GM12878 (cell line): ENCODE measurements at regions of chrX and their contacts with region 1.

Region 1: GRCh38 chrX:18390941-18391538 is 34.4 kb upstream of the CDKL5 start:
- DNase-seq: peak; percentile 13
- ATAC-seq: peak; percentile 67
- H3K4me3 ChIP-seq: no peak overlapping the region
- H3K27ac ChIP-seq: no peak overlapping the region
- H3K4me1 ChIP-seq: no peaks in the 10 kb centered on the region
- H3K27me3 ChIP-seq: no peaks in the 10 kb centered on the region
- CTCF ChIP-seq: peak; percentile 35 to 73 (median 68); a peak in 5 of 6 replicates
- EP300 ChIP-seq: no peak
- POLR2A ChIP-seq: no peak
- RAD21 ChIP-seq: peak; percentile 92

Region 2: DNA sequence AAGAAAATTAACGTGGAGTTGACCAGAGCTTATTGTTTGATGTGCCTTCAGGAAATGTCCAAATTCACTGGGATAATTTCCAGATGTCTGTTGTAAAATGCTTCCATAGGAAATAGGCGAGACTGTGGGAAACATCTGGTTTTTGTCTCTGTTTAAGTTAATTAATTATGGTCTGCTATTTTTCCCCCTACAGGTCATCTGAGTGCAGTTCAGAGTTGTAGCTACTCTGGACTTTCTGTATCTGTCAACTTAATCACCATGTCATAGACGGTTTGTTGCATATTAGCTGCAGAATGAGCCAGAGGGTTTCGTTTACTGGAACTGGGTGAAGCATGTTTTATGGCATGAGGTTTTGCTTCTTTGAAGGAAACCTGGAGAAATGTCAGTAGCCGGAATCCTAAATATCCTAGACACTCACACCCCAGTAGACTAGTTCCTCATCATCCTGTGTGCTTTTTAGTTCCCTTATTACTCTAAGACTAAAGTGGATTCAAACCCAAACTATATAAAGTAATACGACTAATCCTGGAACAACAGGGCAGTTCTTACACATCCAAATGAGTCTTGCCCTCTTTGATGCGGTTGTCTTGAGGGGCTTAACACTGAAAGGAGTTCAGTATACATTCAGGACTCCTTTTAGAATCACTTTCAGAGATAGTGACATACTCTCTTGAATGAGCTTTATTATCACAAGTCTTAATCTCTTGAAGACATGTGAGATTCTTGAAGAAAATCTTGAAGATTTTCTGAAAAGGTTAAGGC is 379.0 kb after region 1 on chrX:
- CTCF ChIA-PET with region 1: no interaction called
- POLR2A ChIA-PET with region 1: no interaction called
- RAD21 ChIA-PET with region 1: no interaction called
- SMC1A ChIA-PET with region 1: no interaction called
- in situ Hi-C with region 1: no loop called
- intact Hi-C with region 1: loop called (anchors 10 kb)
- DNase-seq: no peak
- ATAC-seq: peak; percentile 66
- H3K4me3 ChIP-seq: no peak overlapping the region
- H3K27ac ChIP-seq: no peak overlapping the region
- H3K4me1 ChIP-seq: no peaks in the 10 kb centered on the region
- H3K27me3 ChIP-seq: no peaks in the 10 kb centered on the region
- CTCF ChIP-seq: 0 out of 6 replicates have a peak, but pooled peaks of 1 of the 3 experiments have one; percentile 13
- EP300 ChIP-seq: no peak
- POLR2A ChIP-seq: no peak
- RAD21 ChIP-seq: no peak

Region 3: GRCh38 chrX:18899796-18900447 is 508.9 kb after region 1 on chrX:
- CTCF ChIA-PET with region 1: no interaction called
- POLR2A ChIA-PET with region 1: no interaction called
- RAD21 ChIA-PET with region 1: no interaction called
- SMC1A ChIA-PET with region 1: interaction called, 3 read pairs
- in situ Hi-C with region 1: loop called (anchors 10 kb)
- intact Hi-C with region 1: no loop called
- DNase-seq: no peak
- ATAC-seq: peak; percentile 54; the same call in 2 of the 3 replicates
- H3K4me3 ChIP-seq: no peak overlapping the region
- H3K27ac ChIP-seq: no peak overlapping the region
- H3K4me1 ChIP-seq: no peaks in the 10 kb centered on the region
- H3K27me3 ChIP-seq: no peaks in the 10 kb centered on the region
- CTCF ChIP-seq: peak; percentile 40 to 55 (median 44); a peak in 3 of 6 replicates
- EP300 ChIP-seq: no peak
- POLR2A ChIP-seq: no peak
- RAD21 ChIP-seq: peak; percentile 68

Region 4: DNA sequence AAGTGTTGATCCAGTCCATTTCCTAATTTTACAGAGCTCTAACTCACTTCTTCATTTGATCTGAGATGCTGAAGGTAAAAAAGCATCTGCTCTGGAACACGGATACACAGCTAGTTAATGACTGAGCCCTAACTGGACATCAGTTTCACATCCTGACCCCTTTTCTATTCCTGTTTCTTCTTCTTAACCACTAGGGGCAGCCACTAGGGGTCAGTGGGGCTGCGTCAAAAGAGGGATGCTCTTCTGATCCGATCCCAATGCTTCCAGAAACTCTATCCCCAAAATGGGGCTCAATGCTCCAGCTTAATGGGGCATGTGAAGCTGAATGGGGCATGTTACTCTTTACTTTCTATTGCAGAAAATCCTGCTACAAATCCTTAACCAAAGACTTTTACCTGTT is 626.2 kb after region 1 on chrX:
- CTCF ChIA-PET with region 1: interaction called, 3 read pairs
- POLR2A ChIA-PET with region 1: no interaction called
- RAD21 ChIA-PET with region 1: interaction called, 4 read pairs
- SMC1A ChIA-PET with region 1: no interaction called
- in situ Hi-C with region 1: loop called (anchors 25 kb)
- intact Hi-C with region 1: loop called (anchors 5 kb)
- DNase-seq: no peak
- ATAC-seq: peak; percentile 83
- H3K4me3 ChIP-seq: no peak overlapping the region
- H3K27ac ChIP-seq: no peak overlapping the region
- H3K4me1 ChIP-seq: no peaks in the 10 kb centered on the region
- H3K27me3 ChIP-seq: no peaks in the 10 kb centered on the region
- CTCF ChIP-seq: peak; percentile 49 to 55 (median 53)
- EP300 ChIP-seq: no peak
- POLR2A ChIP-seq: no peak
- RAD21 ChIP-seq: peak; percentile 63

Region 5: GRCh38 chrX:19535476-19535875 is 1144.4 kb after region 1 on chrX:
- CTCF ChIA-PET with region 1: no interaction called
- POLR2A ChIA-PET with region 1: no interaction called
- RAD21 ChIA-PET with region 1: no interaction called
- SMC1A ChIA-PET with region 1: no interaction called
- in situ Hi-C with region 1: no loop called
- intact Hi-C with region 1: loop called (anchors 5 kb)
- DNase-seq: no peak
- ATAC-seq: peak; percentile 57
- H3K4me3 ChIP-seq: no peak overlapping the region
- H3K27ac ChIP-seq: no peak overlapping the region
- H3K4me1 ChIP-seq: no peaks in the 10 kb centered on the region
- H3K27me3 ChIP-seq: no peaks in the 10 kb centered on the region
- CTCF ChIP-seq: peak in 2 of 3 experiments; percentile 12 to 13; a peak in 1 of 6 replicates
- EP300 ChIP-seq: no peak
- POLR2A ChIP-seq: no peak
- RAD21 ChIP-seq: peak; percentile 30